Heart right ventricle (tissue), 16 donors: ENCODE measurements at regions of chr5 and their contacts with region 1.

Region 1: GRCh38 chr5:146533260-146533857 is 17.4 kb upstream of the GPR151 start:
- DNase-seq: peak; percentile 26 to 31
- ATAC-seq: peak in 3 of 8 donors; percentile 22 to 73 (median 51)
- H3K4me3 ChIP-seq: no peak overlapping the region
- H3K27ac ChIP-seq: no peak overlapping the region
- H3K4me1 ChIP-seq: no peaks in the 10 kb centered on the region
- H3K27me3 ChIP-seq: peaks cover 0 to 3% (median 0%) of the 10 kb centered on the region in 7 donors
- CTCF ChIP-seq: peak; percentile 51 to 82 (median 73)

Region 2: GRCh38 chr5:147586832-147587231 is 1053.5 kb after region 1 on chr5:
- intact Hi-C with region 1: loop called in 1 of 10 experiments (anchors 10 kb)
- DNase-seq: no peak
- ATAC-seq: no peak
- H3K4me3 ChIP-seq: no peak overlapping the region
- H3K27ac ChIP-seq: no peak overlapping the region
- H3K4me1 ChIP-seq: no peaks in the 10 kb centered on the region
- H3K27me3 ChIP-seq: peaks cover 0 to 9% (median 0%) of the 10 kb centered on the region in 7 donors
- CTCF ChIP-seq: no peak